ENCODE measurements at regions of chr2 and their contacts with region 1.

Region 1: DNA sequence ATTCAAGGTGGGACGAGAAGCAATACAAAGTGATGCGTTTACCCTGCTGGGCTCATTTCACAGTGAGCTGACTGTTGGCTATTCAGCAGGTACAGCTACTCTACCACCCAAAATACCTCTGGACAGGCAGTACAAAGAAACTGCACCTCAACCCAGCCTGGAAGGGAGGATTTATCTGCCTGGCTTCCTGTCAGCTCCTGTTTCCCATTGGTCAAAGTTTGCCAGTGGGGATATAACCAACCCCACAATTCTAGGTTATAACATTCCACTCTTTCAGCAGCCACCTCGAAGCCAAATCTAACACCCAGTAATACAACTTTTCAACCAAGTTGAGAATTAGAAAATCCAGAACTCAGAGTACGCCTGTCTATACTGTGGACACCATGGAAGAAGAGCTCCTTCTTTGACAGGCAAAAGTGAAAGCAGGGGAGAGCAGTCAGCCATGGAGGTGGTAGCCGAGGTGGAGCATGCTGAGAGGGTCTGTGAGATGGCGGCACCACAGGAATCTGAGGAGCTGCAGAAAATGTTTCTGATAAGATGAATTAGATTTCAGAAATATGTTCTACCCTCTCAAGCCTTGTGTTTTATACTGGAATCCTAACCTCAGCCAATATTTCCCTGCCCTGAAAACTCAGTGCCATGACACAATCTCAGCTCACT is 10.8 kb downstream of the DUSP19 start:
- DNase-seq: no peak
- CTCF ChIP-seq: no peak

Region 2: GRCh38 chr2:183078465-183079138 is 10.7 kb before region 1 on chr2 and contains the start of gene DUSP19:
- CTCF ChIA-PET with region 1: interaction called, 11 read pairs
- POLR2A ChIA-PET with region 1: no interaction called
- DNase-seq: peak; percentile 84
- CTCF ChIP-seq: no peak

Region 3: GRCh38 chr2:183125659-183126341 is 36.5 kb after region 1 on chr2:
- CTCF ChIA-PET with region 1: no interaction called
- POLR2A ChIA-PET with region 1: no interaction called
- DNase-seq: no peak
- CTCF ChIP-seq: no peak

Region 4: GRCh38 chr2:183229386-183229785 is 140.1 kb after region 1 on chr2:
- CTCF ChIA-PET with region 1: no interaction called
- POLR2A ChIA-PET with region 1: no interaction called
- DNase-seq: no peak
- CTCF ChIP-seq: no peak

Region 5: DNA sequence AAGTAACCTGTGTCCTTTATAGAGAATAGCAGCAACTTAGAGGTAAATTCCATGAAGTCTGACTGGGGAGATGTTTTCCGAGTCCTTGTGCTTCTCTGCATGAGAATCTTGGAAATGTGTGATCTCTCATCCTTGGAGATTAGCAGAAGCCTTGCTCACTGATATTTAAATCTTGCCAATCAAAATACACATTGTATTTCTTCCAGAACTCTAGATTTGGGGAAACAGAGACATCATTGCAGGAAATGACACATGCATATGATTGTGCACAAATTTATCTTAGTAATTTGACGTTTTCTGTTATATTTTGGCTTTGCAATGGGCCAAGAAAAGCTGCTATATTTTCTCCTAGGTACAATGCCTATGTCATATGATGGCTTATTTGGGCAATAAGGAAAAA is 1691.6 kb after region 1 on chr2:
- CTCF ChIA-PET with region 1: no interaction called
- POLR2A ChIA-PET with region 1: no interaction called
- DNase-seq: no peak
- CTCF ChIP-seq: no peak